BJ (cell line): ENCODE measurements at regions of chr11 and their contacts with region 1.

Region 1: DNA sequence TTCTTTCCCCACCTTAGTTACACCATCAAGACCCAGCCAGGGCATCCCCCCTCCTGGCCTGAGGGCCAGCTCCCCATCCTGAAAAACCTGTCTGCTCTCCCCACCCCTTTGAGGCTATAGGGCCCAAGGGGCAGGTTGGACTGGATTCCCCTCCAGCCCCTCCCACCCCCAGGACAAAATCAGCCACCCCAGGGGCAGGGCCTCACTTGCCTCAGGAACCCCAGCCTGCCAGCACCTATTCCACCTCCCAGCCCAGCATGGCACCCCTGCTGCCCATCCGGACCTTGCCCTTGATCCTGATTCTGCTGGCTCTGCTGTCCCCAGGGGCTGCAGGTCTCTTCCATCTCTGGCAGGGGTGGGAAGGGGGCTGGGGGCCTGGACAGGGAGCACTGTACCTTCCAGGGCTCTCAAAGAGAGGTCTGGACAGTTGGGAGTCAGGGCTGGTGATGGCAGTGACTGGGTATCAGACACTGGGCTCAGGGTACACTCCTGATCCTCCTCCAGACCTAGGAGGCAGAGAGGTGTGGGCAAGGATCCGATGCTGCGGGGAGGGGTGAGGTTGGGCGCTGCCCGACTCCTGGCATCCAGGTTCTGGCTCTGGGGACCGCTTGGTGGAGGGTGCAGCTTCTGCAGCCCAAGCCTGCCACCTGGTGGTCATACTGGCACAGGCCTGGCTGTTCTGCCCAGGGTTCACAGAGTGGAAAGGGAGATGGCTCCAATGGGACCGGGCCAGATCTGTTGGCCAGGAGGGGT is at the start of gene UPK2:
- DNase-seq: no peak
- H3K4me3 ChIP-seq: no peak within 1 kb of the TSS
- H3K27me3 ChIP-seq: peaks cover 19% of the 10 kb centered on the region
- CTCF ChIP-seq: peak; percentile 95
- polyA plus RNA-seq, gene UPK2: 0.18 and 0.20 TPM in 2 replicates

Region 2: DNA sequence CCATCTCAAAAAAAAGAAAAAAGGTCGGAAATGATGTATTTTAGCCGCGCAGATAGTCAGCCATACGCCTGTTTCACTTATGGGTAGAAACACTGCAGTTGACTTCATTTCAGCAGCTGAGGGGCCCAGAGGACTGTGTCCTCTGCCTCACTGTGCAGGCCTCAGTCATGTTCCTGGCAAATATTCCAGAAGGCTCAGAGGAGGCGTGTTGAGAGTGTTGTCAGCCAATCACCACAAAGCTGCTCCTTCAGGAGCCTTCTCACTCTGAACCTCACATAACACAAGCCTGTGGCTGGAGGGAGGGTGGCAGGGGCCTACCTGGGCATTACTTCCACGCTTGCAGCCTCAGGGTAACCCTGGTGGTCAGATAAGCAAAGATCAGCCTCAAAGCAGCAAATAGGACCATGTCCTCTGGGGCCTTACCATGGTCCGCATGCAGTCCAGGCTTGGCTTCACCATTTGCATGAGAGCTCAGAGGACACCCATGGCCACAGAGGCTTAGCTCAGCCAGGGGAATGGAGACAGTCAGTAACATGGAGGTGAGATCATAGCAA is 259.5 kb before region 1 on chr11:
- CTCF ChIA-PET with region 1: interaction called, 136 read pairs
- POLR2A ChIA-PET with region 1: interaction called, 3 read pairs
- DNase-seq: no peak
- H3K4me3 ChIP-seq: no peak overlapping the region
- H3K27me3 ChIP-seq: no peaks in the 10 kb centered on the region
- CTCF ChIP-seq: no peak

Region 3: DNA sequence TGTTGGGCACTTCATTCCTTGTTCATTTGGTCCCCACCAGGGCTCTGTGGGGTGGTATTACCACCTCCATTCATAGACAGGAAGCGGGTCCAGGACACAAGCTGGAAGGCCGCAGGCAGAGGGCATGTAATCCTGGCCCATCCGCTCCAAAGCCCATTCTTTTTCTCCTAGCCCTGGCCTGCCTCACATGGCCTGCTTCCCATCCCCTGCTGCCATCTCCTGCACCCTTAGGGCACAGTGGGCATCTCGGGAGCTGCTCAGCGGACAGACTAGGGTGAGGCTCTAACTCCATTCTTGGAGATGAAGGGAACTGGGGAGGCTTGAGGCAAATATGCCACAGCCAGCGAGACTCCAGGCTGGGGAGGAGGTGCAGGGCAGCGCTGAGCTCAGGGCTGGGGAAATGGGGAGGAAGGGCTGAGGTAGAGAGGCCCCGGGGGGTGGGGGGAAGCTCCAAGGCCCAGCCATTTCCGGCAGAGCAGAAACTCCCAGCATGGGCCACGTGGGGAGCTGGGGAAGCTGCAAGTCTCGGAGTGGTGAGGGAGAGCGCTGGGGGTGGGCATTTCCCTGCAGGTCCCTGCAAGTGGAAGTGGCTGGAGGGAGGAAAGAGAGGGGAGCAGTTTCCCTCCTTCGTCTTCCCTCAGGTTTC is 16.2 kb before region 1 on chr11:
- CTCF ChIA-PET with region 1: interaction called, 16 read pairs
- POLR2A ChIA-PET with region 1: no interaction called
- DNase-seq: no peak
- H3K4me3 ChIP-seq: no peak overlapping the region
- H3K27me3 ChIP-seq: peaks cover 2% of the 10 kb centered on the region
- CTCF ChIP-seq: no peak